Naive thymus-derived CD4-positive, alpha-beta T cell (primary cell): ENCODE measurements at regions of chr12 and their contacts with region 1.

Region 1: DNA sequence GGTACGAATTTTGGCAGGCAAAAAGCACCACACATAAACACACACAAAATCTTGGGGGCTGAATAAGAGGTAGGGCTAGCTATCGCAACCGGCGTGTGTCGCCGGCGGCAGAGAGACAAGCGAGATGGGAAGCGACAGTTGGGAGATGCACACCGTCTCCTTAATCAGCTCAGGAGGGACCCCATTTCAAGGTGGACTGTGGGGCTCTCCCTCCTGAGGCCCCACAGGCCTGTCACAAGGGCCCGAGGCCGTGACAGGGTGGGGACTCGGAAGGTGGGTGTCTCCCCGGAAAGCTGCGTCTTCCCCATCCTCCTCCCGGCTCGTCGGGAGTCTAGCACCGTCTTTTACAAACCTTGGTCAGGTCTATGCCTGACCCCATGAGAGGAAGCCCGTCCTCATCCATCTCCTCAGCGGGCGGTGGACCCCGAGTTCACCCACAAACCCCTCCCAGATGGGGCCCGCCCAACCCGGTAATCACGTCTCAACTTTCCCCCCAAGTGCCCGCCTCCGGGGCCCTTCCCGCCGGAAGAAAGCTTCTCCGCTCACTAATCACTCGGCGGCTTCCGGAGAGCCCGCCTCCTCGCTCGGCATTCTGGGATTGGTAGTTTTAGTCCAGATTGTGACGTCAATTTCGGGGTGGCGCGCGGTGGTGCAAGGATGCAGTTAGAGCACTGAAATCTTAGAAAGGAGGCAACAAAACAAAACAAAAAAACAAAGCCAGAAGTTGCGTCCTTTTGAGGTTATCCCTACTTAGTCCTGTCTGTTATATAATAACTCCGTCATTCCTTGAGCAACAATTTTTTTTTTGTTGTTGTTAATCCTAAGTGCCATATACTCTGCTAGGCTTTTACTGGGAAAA is at the start of gene WASHC3:
- DNase-seq: peak; percentile 87 to 96 (median 93)
- ATAC-seq: peak; percentile 97
- H3K4me3 ChIP-seq: peak within 1 kb of the TSS; percentile 89
- H3K4me3 Mint-ChIP-seq: peak within 1 kb of the TSS; percentile 84 to 99 (median 97)
- H3K27ac ChIP-seq: peak within 1 kb of the TSS; percentile 86
- H3K27ac Mint-ChIP-seq: peak within 1 kb of the TSS; percentile 94 to 100 (median 99)
- H3K4me1 ChIP-seq: peaks cover 16 to 17% of the 10 kb centered on the region in 2 donors
- H3K4me1 Mint-ChIP-seq: peaks cover 15 to 54% (median 49%) of the 10 kb centered on the region in 7 donors
- H3K27me3 ChIP-seq: no peaks in the 10 kb centered on the region
- H3K27me3 Mint-ChIP-seq: peaks cover 0 to 21% (median 5%) of the 10 kb centered on the region in 5 donors
- total RNA-seq, gene WASHC3: 32.8 to 59.6 (median 49.6) TPM

Region 2: DNA sequence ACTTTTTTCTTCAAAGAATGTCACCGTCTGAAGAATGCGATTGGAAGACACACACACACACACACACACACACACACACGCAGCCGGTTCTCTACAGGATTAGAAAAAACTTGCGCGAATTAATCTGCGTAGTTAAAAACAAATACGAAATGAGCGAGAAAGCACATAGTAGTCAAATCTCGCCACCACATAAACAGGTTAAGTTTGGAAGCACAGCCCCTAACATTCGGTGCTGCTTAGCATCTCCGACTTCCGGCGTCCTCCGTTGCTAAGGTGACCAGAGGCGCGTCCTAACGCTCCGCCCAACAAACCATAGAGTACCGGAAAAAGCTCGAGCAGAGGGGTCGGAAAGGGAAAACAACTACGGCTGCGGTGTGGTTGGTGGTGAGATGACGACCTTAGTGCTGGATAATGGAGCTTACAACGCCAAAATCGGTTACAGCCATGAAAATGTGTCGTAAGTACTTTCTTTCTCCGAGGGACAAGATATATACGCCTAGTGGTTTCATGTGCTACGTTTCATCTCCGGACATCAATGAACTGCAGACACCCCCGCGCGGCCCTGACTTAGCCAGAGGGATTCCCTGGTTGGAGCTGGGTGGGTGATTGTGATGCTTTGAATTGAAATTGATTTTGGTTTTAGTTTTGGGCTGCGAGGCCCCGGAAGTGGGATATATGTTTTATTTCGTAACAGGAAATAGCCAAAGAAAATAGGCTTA is 1861.2 kb before region 1 on chr12 and contains the start of gene ACTR6:
- CTCF ChIA-PET with region 1: no interaction called
- POLR2A ChIA-PET with region 1: no interaction called
- intact Hi-C with region 1: loop called (anchors 5 kb)
- DNase-seq: peak; percentile 91 to 99 (median 97)
- ATAC-seq: peak; percentile 93
- H3K4me3 ChIP-seq: peak within 1 kb of the TSS; percentile 84
- H3K4me3 Mint-ChIP-seq: peak within 1 kb of the TSS; percentile 95 to 99 (median 98)
- H3K27ac ChIP-seq: peak within 1 kb of the TSS; percentile 95
- H3K27ac Mint-ChIP-seq: peak within 1 kb of the TSS; percentile 98 to 100 (median 99)
- H3K4me1 ChIP-seq: peaks cover 10 to 27% of the 10 kb centered on the region in 2 donors
- H3K4me1 Mint-ChIP-seq: peaks cover 17 to 56% (median 44%) of the 10 kb centered on the region in 7 donors
- H3K27me3 ChIP-seq: no peaks in the 10 kb centered on the region
- H3K27me3 Mint-ChIP-seq: no peaks in the 10 kb centered on the region
- total RNA-seq, gene ACTR6: 24.1 to 46.8 (median 34.6) TPM

Region 3: GRCh38 chr12:101407436-101408345 is 654.1 kb before region 1 on chr12 and contains the start of gene ARL1:
- CTCF ChIA-PET with region 1: no interaction called
- POLR2A ChIA-PET with region 1: interaction called, 3 read pairs
- intact Hi-C with region 1: loop called (anchors 5 kb)
- DNase-seq: peak; percentile 41 to 85 (median 65)
- ATAC-seq: peak; percentile 88
- H3K4me3 ChIP-seq: peak within 1 kb of the TSS; percentile 97
- H3K4me3 Mint-ChIP-seq: peak within 1 kb of the TSS; percentile 92 to 99 (median 98)
- H3K27ac ChIP-seq: peak within 1 kb of the TSS; percentile 85
- H3K27ac Mint-ChIP-seq: peak within 1 kb of the TSS; percentile 82 to 98 (median 95)
- H3K4me1 ChIP-seq: peaks cover 0 to 15% of the 10 kb centered on the region in 2 donors
- H3K4me1 Mint-ChIP-seq: peaks cover 16 to 45% (median 30%) of the 10 kb centered on the region in 7 donors
- H3K27me3 ChIP-seq: no peaks in the 10 kb centered on the region
- H3K27me3 Mint-ChIP-seq: peaks cover 0 to 11% (median 2%) of the 10 kb centered on the region in 5 donors
- total RNA-seq, gene ARL1: 26.2 to 48.4 (median 39.3) TPM

Region 4: DNA sequence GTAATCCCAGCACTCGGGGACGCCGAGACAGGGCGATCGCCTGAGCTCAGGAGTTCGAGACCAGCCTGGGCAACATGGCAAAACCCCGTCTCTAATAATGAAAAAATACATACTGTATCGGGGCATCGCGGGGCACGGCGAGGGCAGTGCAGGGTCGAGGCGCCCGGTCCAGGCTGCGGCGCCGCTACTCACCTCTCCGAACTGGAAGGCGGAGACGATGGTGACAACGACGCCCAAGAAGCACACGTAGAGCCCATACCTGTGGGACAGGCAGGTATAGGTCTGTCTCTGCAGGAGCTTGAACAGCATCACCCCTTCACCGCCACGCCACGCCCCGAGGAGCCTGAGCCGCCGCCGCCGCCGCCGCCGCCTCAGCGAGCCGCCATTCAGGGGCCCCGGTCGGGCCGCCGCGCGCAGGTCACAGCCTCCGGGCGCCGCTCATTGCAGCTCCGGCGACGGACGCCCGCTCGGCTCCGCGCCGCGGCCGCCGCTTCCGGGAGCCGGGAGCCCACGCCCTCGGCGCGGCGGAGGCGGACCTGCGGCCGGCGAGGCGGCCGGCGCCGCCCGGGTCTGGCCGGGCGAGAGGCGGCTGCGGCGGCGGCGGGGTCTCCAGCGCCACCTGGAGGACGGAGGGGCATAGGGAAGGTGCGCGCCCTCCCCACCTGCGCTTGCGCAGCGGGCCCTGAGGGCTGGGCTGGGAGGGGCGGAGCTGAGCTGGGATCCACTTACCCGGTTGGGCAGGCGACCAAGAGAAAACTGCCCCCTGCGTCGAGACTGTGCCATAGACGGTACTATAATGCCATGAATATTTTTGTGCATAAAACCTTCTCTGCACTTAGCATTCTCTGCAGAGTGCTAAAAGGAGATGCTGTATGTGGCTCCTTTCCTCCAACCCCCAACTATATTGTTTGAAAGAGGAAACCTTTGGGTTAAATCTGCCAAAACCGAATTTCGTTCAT is 231.1 kb before region 1 on chr12 and contains the start of gene GNPTAB:
- CTCF ChIA-PET with region 1: no interaction called
- POLR2A ChIA-PET with region 1: interaction called, 3 read pairs
- intact Hi-C with region 1: loop called (anchors 1 to 2 kb)
- DNase-seq: peak; percentile 92 to 98 (median 95)
- ATAC-seq: peak; percentile 98
- H3K4me3 ChIP-seq: peak within 1 kb of the TSS; percentile 89
- H3K4me3 Mint-ChIP-seq: peak within 1 kb of the TSS; percentile 88 to 99 (median 98)
- H3K27ac ChIP-seq: peak within 1 kb of the TSS; percentile 77
- H3K27ac Mint-ChIP-seq: peak within 1 kb of the TSS; percentile 76 to 98 (median 93)
- H3K4me1 ChIP-seq: peaks cover 10 to 19% of the 10 kb centered on the region in 2 donors
- H3K4me1 Mint-ChIP-seq: peaks cover 22 to 52% (median 47%) of the 10 kb centered on the region in 7 donors
- H3K27me3 ChIP-seq: no peaks in the 10 kb centered on the region
- H3K27me3 Mint-ChIP-seq: no peaks in the 10 kb centered on the region
- total RNA-seq, gene GNPTAB: 42.0 to 85.1 (median 62.2) TPM

Region 5: DNA sequence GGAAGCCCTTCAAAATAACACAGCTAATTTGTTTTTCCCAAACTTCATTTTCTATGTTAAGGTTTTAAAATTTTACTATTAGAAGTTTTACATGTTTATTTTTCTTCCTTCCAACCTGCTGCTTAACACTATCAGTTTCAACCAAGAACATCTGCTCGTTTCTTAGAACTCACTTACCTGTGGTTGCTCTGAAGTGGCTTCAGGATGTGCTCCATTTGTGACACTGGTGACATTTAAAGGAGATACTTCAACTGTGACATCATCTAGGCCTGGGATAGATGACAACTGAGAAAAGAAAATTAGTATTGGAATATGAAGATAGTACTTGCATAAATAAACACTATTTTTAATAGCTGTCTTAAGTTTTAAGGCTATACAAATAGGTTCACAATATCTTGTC is 17.9 kb before region 1 on chr12:
- CTCF ChIA-PET with region 1: interaction called, 3 read pairs
- POLR2A ChIA-PET with region 1: interaction called, 6 read pairs
- intact Hi-C with region 1: loop called (anchors 1 to 2 kb)
- DNase-seq: peak in 8 of 9 donors; percentile 26 to 62 (median 42)
- ATAC-seq: peak; percentile 83
- H3K4me3 ChIP-seq: no peak overlapping the region
- H3K4me3 Mint-ChIP-seq: peak overlapping the region in 9 of 10 donors; percentile 22 to 79 (median 48)
- H3K27ac ChIP-seq: peak overlapping the region; percentile 42
- H3K27ac Mint-ChIP-seq: peak overlapping the region; percentile 16 to 85 (median 50)
- H3K4me1 ChIP-seq: peaks cover 0 to 12% of the 10 kb centered on the region in 2 donors
- H3K4me1 Mint-ChIP-seq: peaks cover 3 to 20% (median 16%) of the 10 kb centered on the region in 7 donors
- H3K27me3 ChIP-seq: no peaks in the 10 kb centered on the region
- H3K27me3 Mint-ChIP-seq: no peaks in the 10 kb centered on the region

Region 6: GRCh38 chr12:102095675-102096263 is 34.0 kb after region 1 on chr12:
- CTCF ChIA-PET with region 1: no interaction called
- POLR2A ChIA-PET with region 1: no interaction called
- intact Hi-C with region 1: no loop called
- DNase-seq: no peak
- ATAC-seq: peak; percentile 56
- H3K4me3 ChIP-seq: no peak overlapping the region
- H3K4me3 Mint-ChIP-seq: no peak overlapping the region
- H3K27ac ChIP-seq: no peak overlapping the region
- H3K27ac Mint-ChIP-seq: no peak overlapping the region
- H3K4me1 ChIP-seq: no peaks in the 10 kb centered on the region
- H3K4me1 Mint-ChIP-seq: peaks cover 0 to 5% (median 3%) of the 10 kb centered on the region in 7 donors
- H3K27me3 ChIP-seq: no peaks in the 10 kb centered on the region
- H3K27me3 Mint-ChIP-seq: no peaks in the 10 kb centered on the region

Region 7: DNA sequence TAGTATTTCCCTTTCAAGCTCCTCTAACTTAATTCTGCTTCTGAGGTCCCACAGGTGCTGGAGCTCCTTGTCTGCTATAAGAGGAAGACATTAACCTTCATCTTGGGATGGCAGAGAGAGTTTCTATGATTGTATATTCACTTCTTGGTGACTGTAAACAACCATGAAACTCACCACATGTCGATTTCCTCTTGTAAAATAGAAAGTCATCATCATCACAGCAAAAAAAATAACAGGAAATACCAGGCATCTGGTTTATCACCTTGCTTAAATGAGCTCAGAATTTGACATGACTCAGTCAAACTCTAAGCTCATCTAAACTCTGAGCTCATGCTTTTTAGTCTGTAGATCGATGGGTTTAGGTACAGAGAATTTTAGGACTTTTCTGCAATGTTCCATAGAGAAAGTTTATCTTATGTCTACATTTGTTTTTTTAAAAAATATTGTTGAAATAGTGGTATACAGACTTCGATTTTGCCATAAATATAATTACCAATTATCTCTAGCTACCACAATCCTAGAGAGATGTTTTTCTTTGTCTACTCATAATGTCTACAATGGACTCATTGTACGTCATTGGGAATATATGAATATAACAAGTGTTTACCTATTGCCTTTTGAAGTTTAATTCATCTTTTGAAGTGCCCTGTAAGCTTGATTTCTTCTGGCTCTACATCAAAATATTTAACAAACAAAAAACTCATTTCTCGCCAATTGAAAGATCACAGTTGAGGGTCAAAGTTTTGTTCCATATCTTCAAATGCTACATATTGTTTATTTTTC is 360.2 kb after region 1 on chr12:
- CTCF ChIA-PET with region 1: no interaction called
- POLR2A ChIA-PET with region 1: no interaction called
- intact Hi-C with region 1: loop called in 1 of 2 experiments (anchors 1 kb)
- DNase-seq: no peak
- ATAC-seq: no peak
- H3K4me3 ChIP-seq: no peak overlapping the region
- H3K4me3 Mint-ChIP-seq: peak overlapping the region in 1 of 10 donors; percentile 33
- H3K27ac ChIP-seq: no peak overlapping the region
- H3K27ac Mint-ChIP-seq: peak overlapping the region in 1 of 9 donors; percentile 85
- H3K4me1 ChIP-seq: peaks cover 0 to 8% of the 10 kb centered on the region in 2 donors
- H3K4me1 Mint-ChIP-seq: peaks cover 0 to 20% (median 0%) of the 10 kb centered on the region in 7 donors
- H3K27me3 ChIP-seq: no peaks in the 10 kb centered on the region
- H3K27me3 Mint-ChIP-seq: peaks cover 0 to 11% (median 6%) of the 10 kb centered on the region in 5 donors

Region 8: GRCh38 chr12:103930034-103930786 is 1868.4 kb after region 1 on chr12 and contains the start of gene HSP90B1:
- CTCF ChIA-PET with region 1: no interaction called
- POLR2A ChIA-PET with region 1: interaction called, 3 read pairs
- intact Hi-C with region 1: loop called (anchors 2 to 5 kb)
- DNase-seq: peak; percentile 95 to 100 (median 99)
- ATAC-seq: peak; percentile 84
- H3K4me3 ChIP-seq: peak within 1 kb of the TSS; percentile 76
- H3K4me3 Mint-ChIP-seq: peak within 1 kb of the TSS; percentile 84 to 99 (median 92)
- H3K27ac ChIP-seq: peak within 1 kb of the TSS; percentile 100
- H3K27ac Mint-ChIP-seq: peak within 1 kb of the TSS; percentile 97 to 100 (median 100)
- H3K4me1 ChIP-seq: peaks cover 36 to 45% of the 10 kb centered on the region in 2 donors
- H3K4me1 Mint-ChIP-seq: peaks cover 42 to 67% (median 53%) of the 10 kb centered on the region in 7 donors
- H3K27me3 ChIP-seq: no peaks in the 10 kb centered on the region
- H3K27me3 Mint-ChIP-seq: peaks cover 0 to 4% (median 0%) of the 10 kb centered on the region in 5 donors
- total RNA-seq, gene HSP90B1: 226 to 461 (median 436) TPM